ENCODE measurements at regions of chr2 and their contacts with region 1.

Region 1: DNA sequence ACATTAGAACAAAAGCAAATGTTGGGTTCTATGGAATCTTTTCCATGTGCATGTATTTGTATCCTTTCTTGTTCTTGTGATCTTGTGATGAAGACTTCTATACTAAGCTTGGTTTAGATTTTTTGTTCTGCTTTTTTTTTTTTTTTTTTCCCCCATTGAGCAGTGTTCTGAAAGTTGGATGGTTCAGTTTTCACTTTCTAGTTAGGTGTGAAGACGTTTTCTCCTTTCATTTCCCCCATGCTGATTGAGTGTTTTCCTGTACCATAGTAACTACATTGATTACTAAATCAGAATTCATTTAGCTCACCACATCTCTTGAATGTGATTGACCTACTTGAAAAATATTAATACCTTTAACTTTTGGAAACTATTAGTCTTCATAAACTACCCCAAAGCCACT is 34.1 kb downstream of the NOP58 start:
- DNase-seq: peak; percentile 63
- CTCF ChIP-seq: no peak

Region 2: DNA sequence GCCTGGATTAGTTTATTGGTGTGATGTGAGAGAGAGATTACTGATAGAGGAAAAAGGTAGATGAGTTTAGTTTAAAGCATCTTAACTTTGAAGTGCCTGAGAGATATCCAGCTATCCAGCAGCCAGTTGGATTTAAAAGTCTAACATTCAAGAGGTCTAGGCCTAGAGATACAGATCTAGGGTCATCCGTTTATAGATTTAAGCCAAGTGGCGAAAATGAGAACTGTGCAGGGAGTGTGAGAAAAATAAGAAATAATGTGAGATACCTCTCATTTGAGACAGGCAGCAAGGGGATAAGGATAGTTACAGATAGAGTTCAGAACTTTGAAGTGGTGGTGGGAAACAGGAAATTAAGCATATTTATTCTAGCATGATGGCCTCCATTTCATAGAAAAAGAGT is 1331.0 kb before region 1 on chr2:
- CTCF ChIA-PET with region 1: no interaction called
- POLR2A ChIA-PET with region 1: interaction called, 11 read pairs
- DNase-seq: no peak
- CTCF ChIP-seq: no peak

Region 3: GRCh38 chr2:202278944-202279343 is 20.8 kb before region 1 on chr2:
- CTCF ChIA-PET with region 1: interaction called, 15 read pairs
- POLR2A ChIA-PET with region 1: interaction called, 5 read pairs
- DNase-seq: no peak
- CTCF ChIP-seq: peak; percentile 15

Measured in GM10248 (cell line).